ENCODE measurements at regions of chr17 and their contacts with region 1.

Region 1: DNA sequence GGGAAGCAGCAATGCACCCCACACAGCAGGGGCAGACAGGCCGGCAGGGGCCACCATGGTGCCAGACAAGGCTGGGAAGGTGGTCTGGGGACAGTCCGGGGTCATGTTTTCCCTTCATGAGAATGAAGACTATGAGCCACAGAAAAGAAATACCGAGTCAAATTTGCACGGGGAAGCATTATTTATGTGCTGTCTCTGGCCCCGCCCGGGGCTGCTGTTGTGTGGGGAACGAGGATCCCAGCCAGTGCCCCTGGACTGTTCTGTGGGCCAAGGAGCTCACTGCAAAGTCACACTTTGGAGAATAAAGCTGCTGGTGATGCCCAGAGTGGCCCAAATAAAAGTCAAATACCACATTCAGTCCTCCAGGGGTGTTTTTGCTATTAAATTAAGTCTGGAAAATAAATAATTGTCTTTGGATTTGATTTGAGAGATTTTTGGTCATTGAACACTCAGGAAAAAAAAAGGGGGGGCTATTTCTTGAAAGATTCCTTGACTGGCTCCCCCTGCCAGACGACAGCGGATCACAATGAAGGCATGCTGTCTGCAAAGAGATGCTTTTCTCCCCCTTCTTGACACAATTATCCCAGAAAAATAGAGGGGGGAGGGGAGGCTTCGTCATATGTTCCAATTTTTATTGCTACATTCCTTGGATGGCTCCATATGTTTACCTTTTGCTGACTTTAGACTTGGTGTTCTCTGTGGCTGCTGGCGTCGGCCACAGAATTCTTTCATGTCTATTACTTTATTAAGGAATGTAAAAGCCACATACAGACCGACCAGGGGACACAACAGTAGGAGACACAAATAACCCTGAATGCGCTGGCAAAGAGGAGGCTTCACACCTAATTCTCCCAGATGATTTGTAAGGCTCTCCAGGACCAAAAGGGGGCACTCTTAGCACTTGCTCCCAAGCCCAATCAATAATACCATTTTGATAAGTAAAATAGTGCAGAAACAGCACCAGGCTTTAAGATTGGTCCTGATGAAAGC is 27.1 kb upstream of the ANKFN1 start:
- DNase-seq: no peak
- H3K4me3 Mint-ChIP-seq: no peak overlapping the region
- H3K27ac Mint-ChIP-seq: no peak overlapping the region
- H3K4me1 Mint-ChIP-seq: no peaks in the 10 kb centered on the region
- H3K27me3 Mint-ChIP-seq: peaks cover 2% of the 10 kb centered on the region

Region 2: DNA sequence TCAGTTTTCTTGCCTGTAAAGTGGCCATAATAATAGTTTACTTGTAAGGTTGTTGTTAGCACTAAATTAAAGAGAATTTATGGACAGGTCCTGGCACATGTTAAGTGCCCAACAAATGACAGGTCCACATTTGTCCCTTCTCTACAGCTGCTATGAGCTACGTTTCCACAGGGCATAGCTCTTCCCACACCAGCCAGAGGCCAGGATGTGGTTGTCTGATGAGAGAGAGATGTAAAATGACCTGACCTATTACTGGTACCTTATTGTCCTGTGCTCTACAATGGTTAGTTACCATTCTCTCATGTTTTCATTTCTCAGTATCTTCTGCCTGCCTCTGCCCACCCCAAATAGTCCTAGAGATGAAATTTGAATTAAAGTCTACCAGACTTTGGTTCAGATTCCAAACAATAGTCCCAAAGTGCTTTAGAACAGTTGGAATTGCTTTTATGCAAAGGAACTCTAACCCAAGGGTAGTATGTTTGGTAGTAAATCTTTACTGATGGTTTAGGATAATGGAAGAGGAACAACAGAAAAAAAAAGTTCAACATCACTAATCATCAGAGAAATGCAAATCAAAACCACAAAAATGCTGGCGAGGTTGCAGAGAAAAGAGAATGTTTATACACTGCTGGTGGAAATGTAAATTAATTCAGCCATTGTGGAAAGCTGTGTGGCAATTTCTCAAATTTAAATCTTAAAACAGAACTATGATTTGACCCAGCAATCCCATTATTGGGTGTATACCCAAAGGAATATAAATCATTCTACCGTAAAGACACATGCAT is 29.9 kb before region 1 on chr17:
- intact Hi-C with region 1: no loop called
- DNase-seq: no peak
- H3K4me3 Mint-ChIP-seq: no peak overlapping the region
- H3K27ac Mint-ChIP-seq: no peak overlapping the region
- H3K4me1 Mint-ChIP-seq: no peaks in the 10 kb centered on the region
- H3K27me3 Mint-ChIP-seq: peaks cover 3% of the 10 kb centered on the region

Region 3: GRCh38 chr17:56478836-56479447 is 352.8 kb after region 1 on chr17:
- intact Hi-C with region 1: loop called (anchors 10 kb)
- DNase-seq: no peak
- H3K4me3 Mint-ChIP-seq: no peak overlapping the region
- H3K27ac Mint-ChIP-seq: no peak overlapping the region
- H3K4me1 Mint-ChIP-seq: no peaks in the 10 kb centered on the region
- H3K27me3 Mint-ChIP-seq: peaks cover 11% of the 10 kb centered on the region